AG04449 (cell line): ENCODE measurements at regions of chr13 and their contacts with region 1.

Region 1: GRCh38 chr13:112606109-112607001 is 18.4 kb upstream of the TUBGCP3 start:
- DNase-seq: no peak
- H3K4me3 ChIP-seq: peak overlapping the region; percentile 50
- CTCF ChIP-seq: peak; percentile 77

Region 2: GRCh38 chr13:111474136-111475002 is 1132.0 kb before region 1 on chr13:
- CTCF ChIA-PET with region 1: interaction called, 132 read pairs
- POLR2A ChIA-PET with region 1: no interaction called
- DNase-seq: peak; percentile 7
- H3K4me3 ChIP-seq: no peak overlapping the region
- CTCF ChIP-seq: peak; percentile 35

Region 3: GRCh38 chr13:112466132-112467058 is 140.0 kb before region 1 on chr13:
- CTCF ChIA-PET with region 1: no interaction called
- POLR2A ChIA-PET with region 1: no interaction called
- DNase-seq: no peak
- H3K4me3 ChIP-seq: no peak overlapping the region
- CTCF ChIP-seq: no peak

Region 4: DNA sequence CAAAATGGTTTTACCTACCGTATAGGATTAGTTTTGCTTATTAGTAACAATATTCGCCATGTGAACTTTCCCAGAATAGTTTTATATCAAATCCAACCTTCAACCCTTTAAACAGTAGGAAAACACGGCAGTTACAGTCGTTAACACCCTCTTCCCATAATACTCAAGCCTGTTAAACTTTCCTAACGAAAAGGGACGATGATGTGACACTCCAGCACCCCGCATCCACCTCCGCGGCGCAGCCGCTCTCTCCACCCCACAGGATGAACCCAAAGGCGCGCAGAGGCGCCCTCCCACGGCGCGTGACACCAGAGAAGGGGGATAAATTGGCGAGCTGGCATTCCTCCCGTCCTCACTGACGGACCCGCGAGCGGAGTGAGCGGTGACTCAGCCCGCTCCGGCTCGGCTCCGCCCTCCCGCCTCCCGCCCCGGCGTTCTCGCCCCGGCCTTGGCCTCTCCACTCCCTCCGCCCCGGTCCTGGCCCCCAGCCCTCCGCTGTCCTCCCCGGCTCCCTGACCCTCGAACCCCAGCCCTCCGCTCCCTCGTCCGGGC is 19.1 kb before region 1 on chr13:
- CTCF ChIA-PET with region 1: interaction called, 40 read pairs
- POLR2A ChIA-PET with region 1: interaction called, 6 read pairs
- DNase-seq: no peak
- H3K4me3 ChIP-seq: peak overlapping the region; percentile 95
- CTCF ChIP-seq: no peak

Region 5: GRCh38 chr13:112596235-112596634 is 10.1 kb before region 1 on chr13:
- CTCF ChIA-PET with region 1: interaction called, 40 read pairs
- POLR2A ChIA-PET with region 1: no interaction called
- DNase-seq: no peak
- H3K4me3 ChIP-seq: no peak overlapping the region
- CTCF ChIP-seq: no peak

Region 6: GRCh38 chr13:112616586-112617362 is 10.4 kb after region 1 on chr13:
- CTCF ChIA-PET with region 1: interaction called, 34 read pairs
- POLR2A ChIA-PET with region 1: no interaction called
- DNase-seq: no peak
- H3K4me3 ChIP-seq: no peak overlapping the region
- CTCF ChIP-seq: peak; percentile 70

Region 7: GRCh38 chr13:112637017-112637801 is 30.9 kb after region 1 on chr13:
- CTCF ChIA-PET with region 1: interaction called, 12 read pairs
- POLR2A ChIA-PET with region 1: no interaction called
- DNase-seq: no peak
- H3K4me3 ChIP-seq: no peak overlapping the region
- CTCF ChIP-seq: no peak

Region 8: DNA sequence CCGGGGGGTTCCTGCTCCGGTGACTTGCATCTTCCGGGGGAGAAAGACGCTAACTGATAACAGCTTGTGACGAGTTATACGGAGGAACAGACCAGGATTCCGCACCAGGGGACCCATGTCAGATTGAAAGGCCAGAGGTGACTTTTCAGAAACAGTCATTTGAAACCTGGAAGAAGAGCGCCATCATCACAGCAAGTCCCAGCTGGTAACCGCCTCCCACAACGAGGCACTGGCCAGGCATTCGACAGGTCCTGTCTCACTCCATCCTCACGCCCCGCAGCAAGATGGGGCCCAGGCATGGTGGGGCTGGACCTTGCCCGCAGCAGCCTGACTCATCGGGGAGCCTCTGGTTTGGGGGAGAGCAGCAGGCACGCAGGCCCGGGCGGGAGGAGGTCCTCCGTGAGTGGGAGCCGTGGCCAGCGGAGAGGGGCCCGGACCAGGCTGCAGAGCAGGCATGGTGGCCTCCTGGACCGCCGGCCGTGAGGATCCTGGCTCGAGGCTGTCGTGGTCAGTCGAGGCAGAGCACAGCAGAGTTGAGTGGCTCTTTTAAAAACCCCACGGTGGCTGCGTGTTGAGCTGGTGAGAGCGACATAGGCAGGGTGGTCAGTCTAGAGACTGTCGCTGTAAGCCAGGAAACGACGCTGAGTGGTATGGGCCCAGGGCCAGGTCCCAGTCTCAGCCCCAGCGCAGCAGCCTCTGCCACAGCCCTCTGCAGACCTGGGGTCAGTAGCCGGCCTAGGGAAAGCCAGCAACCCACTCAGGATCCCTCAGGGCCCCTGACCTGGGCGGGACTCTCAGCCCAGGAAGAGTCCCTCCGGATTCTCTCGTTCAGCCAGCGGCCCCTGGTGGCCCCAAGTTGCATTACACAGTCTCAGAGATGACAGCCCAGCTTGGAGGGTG is 267.7 kb after region 1 on chr13:
- CTCF ChIA-PET with region 1: interaction called, 28 read pairs
- POLR2A ChIA-PET with region 1: no interaction called
- DNase-seq: no peak
- H3K4me3 ChIP-seq: no peak overlapping the region
- CTCF ChIP-seq: peak; percentile 88